ENCODE measurements at regions of chr2 and their contacts with region 1.

Region 1: GRCh38 chr2:219352448-219353023 is 20.0 kb upstream of the RESP18 start:
- DNase-seq: peak; percentile 89
- ATAC-seq: peak; percentile 95
- H3K4me3 Mint-ChIP-seq: no peak overlapping the region
- H3K27ac Mint-ChIP-seq: no peak overlapping the region
- H3K4me1 Mint-ChIP-seq: no peaks in the 10 kb centered on the region
- H3K27me3 Mint-ChIP-seq: peaks cover 43% of the 10 kb centered on the region
- CTCF ChIP-seq: peak; percentile 90

Region 2: GRCh38 chr2:219323434-219323833 is 29.1 kb before region 1 on chr2:
- CTCF ChIA-PET with region 1: no interaction called
- POLR2A ChIA-PET with region 1: no interaction called
- intact Hi-C with region 1: no loop called
- DNase-seq: no peak
- ATAC-seq: no peak
- H3K4me3 Mint-ChIP-seq: no peak overlapping the region
- H3K27ac Mint-ChIP-seq: no peak overlapping the region
- H3K4me1 Mint-ChIP-seq: peaks cover 8% of the 10 kb centered on the region
- H3K27me3 Mint-ChIP-seq: peaks cover 12% of the 10 kb centered on the region
- CTCF ChIP-seq: no peak

Region 3: GRCh38 chr2:219362524-219363164 is 10.1 kb after region 1 on chr2:
- CTCF ChIA-PET with region 1: interaction called, 10 read pairs
- POLR2A ChIA-PET with region 1: no interaction called
- intact Hi-C with region 1: no loop called
- DNase-seq: peak; percentile 37
- ATAC-seq: peak; percentile 60
- H3K4me3 Mint-ChIP-seq: no peak overlapping the region
- H3K27ac Mint-ChIP-seq: no peak overlapping the region
- H3K4me1 Mint-ChIP-seq: peaks cover 9% of the 10 kb centered on the region
- H3K27me3 Mint-ChIP-seq: peaks cover 16% of the 10 kb centered on the region
- CTCF ChIP-seq: no peak

Region 4: GRCh38 chr2:220215785-220216184 is 863.2 kb after region 1 on chr2:
- CTCF ChIA-PET with region 1: no interaction called
- POLR2A ChIA-PET with region 1: no interaction called
- intact Hi-C with region 1: no loop called
- DNase-seq: no peak
- ATAC-seq: no peak
- H3K4me3 Mint-ChIP-seq: no peak overlapping the region
- H3K27ac Mint-ChIP-seq: no peak overlapping the region
- H3K4me1 Mint-ChIP-seq: no peaks in the 10 kb centered on the region
- H3K27me3 Mint-ChIP-seq: no peaks in the 10 kb centered on the region
- CTCF ChIP-seq: no peak